ENCODE measurements at regions of chr21 and their contacts with region 1.

Region 1: GRCh38 chr21:42593007-42593806 is 60.2 kb upstream of the PDE9A start:
- DNase-seq: no peak
- ATAC-seq: peak; percentile 98
- H3K4me3 ChIP-seq: 0 out of 4 replicates have a peak overlapping the region, but pooled peaks of 1 of the 2 experiments have one; percentile 8
- H3K27ac ChIP-seq: no peak overlapping the region
- H3K4me1 ChIP-seq: no peaks in the 10 kb centered on the region
- H3K27me3 ChIP-seq: no peaks in the 10 kb centered on the region
- CTCF ChIP-seq: peak; percentile 84

Region 2: DNA sequence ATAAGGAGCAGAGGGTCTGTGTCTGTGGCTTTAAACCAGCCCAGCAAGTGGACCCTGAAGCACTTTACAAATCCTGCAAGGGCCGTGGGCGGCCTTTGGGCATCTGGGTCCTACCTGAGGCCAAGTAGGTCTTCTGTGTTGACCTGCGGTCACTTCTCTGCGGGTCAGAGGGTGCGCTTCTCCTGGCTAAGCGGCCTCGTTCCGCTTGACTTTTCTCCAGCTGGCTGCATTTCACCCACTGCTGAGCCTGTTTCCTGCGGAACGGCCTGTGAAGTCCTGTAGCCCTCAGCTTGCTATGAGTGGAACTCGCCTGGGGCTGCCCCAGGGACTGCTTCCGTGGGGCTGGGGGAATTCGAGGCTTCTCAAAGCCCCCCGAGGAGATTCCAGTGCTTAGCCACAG is 36.2 kb before region 1 on chr21:
- CTCF ChIA-PET with region 1: no interaction called
- POLR2A ChIA-PET with region 1: no interaction called
- in situ Hi-C with region 1: no loop called
- intact Hi-C with region 1: no loop called
- DNase-seq: no peak
- ATAC-seq: no peak
- H3K4me3 ChIP-seq: no peak overlapping the region
- H3K27ac ChIP-seq: no peak overlapping the region
- H3K4me1 ChIP-seq: no peaks in the 10 kb centered on the region
- H3K27me3 ChIP-seq: no peaks in the 10 kb centered on the region
- CTCF ChIP-seq: no peak

Region 3: DNA sequence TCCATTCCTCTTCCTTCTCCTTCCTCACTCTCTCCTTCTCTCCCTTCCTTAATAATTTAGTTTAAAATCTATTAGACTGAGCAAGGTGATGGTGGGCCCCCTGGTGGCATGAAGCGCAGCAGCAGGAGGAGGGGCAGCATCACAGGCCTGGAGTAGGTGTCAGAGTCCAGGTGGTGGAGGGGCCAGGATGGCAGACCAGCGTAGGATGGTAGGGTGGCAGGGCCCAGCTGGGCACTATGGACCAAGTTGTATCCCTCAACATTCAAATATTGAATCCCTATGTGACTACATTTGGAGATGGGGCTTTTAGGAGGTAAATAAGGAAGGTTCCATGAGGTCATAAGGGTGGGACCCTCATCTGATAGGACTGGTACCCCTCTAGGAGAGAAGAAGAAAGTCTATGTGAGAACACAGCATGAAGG is 225.1 kb after region 1 on chr21:
- CTCF ChIA-PET with region 1: no interaction called
- POLR2A ChIA-PET with region 1: no interaction called
- in situ Hi-C with region 1: no loop called
- intact Hi-C with region 1: loop called (anchors 5 kb)
- DNase-seq: no peak
- ATAC-seq: peak; percentile 72; the same call in 1 of the 2 replicates
- H3K4me3 ChIP-seq: no peak overlapping the region
- H3K27ac ChIP-seq: no peak overlapping the region
- H3K4me1 ChIP-seq: no peaks in the 10 kb centered on the region
- H3K27me3 ChIP-seq: no peaks in the 10 kb centered on the region
- CTCF ChIP-seq: peak; percentile 72

Region 4: DNA sequence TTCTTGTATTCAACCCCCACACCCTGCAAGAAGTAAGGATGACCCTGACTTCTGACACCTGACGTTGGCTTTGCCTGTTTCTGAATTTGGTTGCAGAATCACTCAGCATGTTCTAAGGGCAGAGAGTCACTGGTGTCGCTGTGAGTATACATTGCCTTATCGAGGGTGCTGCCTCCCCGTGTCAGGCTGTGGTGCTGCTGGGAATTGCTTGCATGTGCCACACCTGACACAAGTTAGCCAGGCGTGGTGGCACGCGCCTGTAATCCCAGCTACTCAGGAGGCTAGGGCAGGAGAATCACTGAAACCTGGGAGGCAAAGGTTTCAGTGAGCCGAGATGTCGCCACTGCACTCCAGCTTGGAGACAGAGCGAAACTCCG is 240.2 kb after region 1 on chr21:
- CTCF ChIA-PET with region 1: interaction called, 4 read pairs
- POLR2A ChIA-PET with region 1: no interaction called
- in situ Hi-C with region 1: no loop called
- intact Hi-C with region 1: loop called (anchors 5 kb)
- DNase-seq: no peak
- ATAC-seq: peak; percentile 62
- H3K4me3 ChIP-seq: no peak overlapping the region
- H3K27ac ChIP-seq: no peak overlapping the region
- H3K4me1 ChIP-seq: no peaks in the 10 kb centered on the region
- H3K27me3 ChIP-seq: no peaks in the 10 kb centered on the region
- CTCF ChIP-seq: peak; percentile 52; the same call in 1 of the 2 replicates